Calu3 (cell line): ENCODE measurements at regions of chr22 and their contacts with region 1.

Region 1: GRCh38 chr22:43385770-43386641 is 25.8 kb upstream of the MPPED1 start:
- DNase-seq: peak; percentile 79
- H3K4me3 Mint-ChIP-seq: no peak overlapping the region
- H3K27ac Mint-ChIP-seq: no peak overlapping the region
- H3K4me1 Mint-ChIP-seq: no peaks in the 10 kb centered on the region
- H3K27me3 Mint-ChIP-seq: peaks cover 100% of the 10 kb centered on the region
- CTCF ChIP-seq: peak; percentile 78

Region 2: DNA sequence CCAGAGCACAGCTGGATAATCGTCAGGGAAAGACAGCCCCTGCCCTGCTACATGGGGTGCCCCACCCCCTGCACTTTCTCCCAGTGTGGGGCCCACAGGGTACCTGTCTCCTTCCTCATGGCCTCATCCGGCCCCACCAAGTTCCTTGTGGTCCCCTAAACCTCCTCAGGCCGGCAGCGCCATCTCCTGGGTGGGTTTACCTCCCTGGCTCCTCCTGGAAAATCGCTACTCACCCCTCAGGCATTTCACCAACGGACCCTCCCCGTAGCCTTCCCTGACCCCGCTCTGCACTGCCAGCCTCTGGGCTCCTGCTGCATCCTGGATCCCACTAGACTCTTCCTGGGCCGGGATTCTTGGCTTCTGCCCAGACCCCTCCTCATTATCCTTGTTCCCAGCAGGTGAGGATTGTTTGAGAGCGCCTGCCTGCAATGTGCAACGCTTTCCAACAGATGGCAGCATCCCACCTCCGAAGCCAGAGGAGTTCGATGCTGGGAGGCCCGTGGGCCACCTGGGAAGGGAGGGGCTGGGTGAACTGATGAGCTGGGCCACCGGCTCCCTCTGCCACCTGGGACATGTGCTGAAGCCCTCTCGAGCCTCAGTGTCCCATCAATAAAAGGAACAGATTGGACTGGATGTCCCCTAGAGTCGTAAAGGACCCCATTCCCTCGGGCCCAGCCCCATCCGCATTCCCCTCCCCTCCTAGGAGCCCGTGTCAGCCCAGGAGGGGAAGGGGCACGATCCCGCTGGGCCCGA is 154.9 kb before region 1 on chr22:
- CTCF ChIA-PET with region 1: interaction called, 5 read pairs
- intact Hi-C with region 1: loop called (anchors 1 kb)
- DNase-seq: peak; percentile 81
- H3K4me3 Mint-ChIP-seq: peak overlapping the region; percentile 33
- H3K27ac Mint-ChIP-seq: peak overlapping the region; percentile 9
- H3K4me1 Mint-ChIP-seq: peaks cover 18% of the 10 kb centered on the region
- H3K27me3 Mint-ChIP-seq: peaks cover 65% of the 10 kb centered on the region
- CTCF ChIP-seq: peak; percentile 97

Region 3: DNA sequence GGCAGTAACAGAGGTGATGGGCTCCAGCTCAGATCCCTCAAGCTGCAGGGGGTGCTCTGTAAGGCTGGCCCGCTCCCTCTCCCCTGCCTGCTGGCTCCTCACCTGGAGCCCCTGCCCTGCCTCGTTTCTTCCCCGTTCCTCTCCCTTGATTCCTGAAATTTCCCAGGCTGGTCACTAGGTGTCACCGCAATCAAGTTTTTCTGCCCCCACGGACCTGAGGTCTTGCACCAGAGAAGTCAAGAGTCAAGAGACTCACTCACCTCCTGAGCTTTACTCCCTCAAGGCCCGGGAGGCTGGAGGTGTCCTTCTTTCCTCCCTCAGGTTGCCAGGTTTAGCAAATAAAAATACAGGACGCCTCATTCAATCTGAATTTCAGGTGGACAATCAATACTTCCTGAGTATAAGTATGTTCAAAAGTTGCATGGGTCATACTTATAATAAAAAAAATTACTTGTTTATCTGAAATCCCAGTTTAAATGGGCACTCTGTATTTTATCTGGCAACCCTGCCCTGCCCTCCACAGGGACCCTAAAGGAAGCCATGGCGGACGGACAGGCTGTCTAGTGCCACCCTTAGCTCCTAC is 112.0 kb before region 1 on chr22:
- CTCF ChIA-PET with region 1: interaction called, 7 read pairs
- intact Hi-C with region 1: loop called (anchors 2 kb)
- DNase-seq: peak; percentile 69
- H3K4me3 Mint-ChIP-seq: no peak overlapping the region
- H3K27ac Mint-ChIP-seq: peak overlapping the region; percentile 37
- H3K4me1 Mint-ChIP-seq: peaks cover 21% of the 10 kb centered on the region
- H3K27me3 Mint-ChIP-seq: peaks cover 34% of the 10 kb centered on the region
- CTCF ChIP-seq: peak; percentile 88